ENCODE measurements at regions of chr12 and their contacts with region 1.

Region 1: DNA sequence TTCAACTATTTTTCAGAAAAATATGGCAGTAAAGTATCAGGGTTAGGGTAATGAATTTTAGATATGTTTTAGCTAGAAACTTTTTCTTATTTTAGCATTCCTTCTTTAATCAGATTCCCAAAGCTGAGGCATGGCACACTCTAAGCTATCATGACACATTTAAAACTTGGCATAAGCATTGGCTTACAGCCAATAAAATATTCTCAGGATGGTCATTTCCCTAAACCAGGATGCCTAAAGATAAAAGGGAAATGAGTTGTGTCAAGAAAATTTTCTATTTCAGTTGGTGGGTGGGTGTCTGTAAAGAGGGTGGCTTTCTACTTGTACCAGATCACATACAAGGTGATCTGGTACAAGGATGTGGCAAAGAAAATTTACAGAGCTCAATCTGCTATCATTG is 47.8 kb downstream of the PEBP1 start:
- DNase-seq: no peak
- ATAC-seq: no peak
- H3K4me3 ChIP-seq: no peak overlapping the region
- H3K27ac ChIP-seq: no peak overlapping the region
- H3K4me1 ChIP-seq: peaks cover 6% of the 10 kb centered on the region; the same call in 1 of the 2 replicates
- H3K27me3 ChIP-seq: no peaks in the 10 kb centered on the region
- CTCF ChIP-seq: no peak
- EP300 ChIP-seq: no peak
- POLR2A ChIP-seq: no peak
- RAD21 ChIP-seq: no peak

Region 2: GRCh38 chr12:118145113-118145797 is 38.5 kb before region 1 on chr12:
- CTCF ChIA-PET with region 1: no interaction called
- POLR2A ChIA-PET with region 1: no interaction called
- in situ Hi-C with region 1: no loop called
- intact Hi-C with region 1: no loop called
- DNase-seq: no peak
- ATAC-seq: no peak
- H3K4me3 ChIP-seq: no peak overlapping the region
- H3K27ac ChIP-seq: no peak overlapping the region
- H3K4me1 ChIP-seq: peaks cover 48% of the 10 kb centered on the region
- H3K27me3 ChIP-seq: no peaks in the 10 kb centered on the region
- CTCF ChIP-seq: no peak
- EP300 ChIP-seq: no peak
- POLR2A ChIP-seq: no peak
- RAD21 ChIP-seq: no peak

Region 3: DNA sequence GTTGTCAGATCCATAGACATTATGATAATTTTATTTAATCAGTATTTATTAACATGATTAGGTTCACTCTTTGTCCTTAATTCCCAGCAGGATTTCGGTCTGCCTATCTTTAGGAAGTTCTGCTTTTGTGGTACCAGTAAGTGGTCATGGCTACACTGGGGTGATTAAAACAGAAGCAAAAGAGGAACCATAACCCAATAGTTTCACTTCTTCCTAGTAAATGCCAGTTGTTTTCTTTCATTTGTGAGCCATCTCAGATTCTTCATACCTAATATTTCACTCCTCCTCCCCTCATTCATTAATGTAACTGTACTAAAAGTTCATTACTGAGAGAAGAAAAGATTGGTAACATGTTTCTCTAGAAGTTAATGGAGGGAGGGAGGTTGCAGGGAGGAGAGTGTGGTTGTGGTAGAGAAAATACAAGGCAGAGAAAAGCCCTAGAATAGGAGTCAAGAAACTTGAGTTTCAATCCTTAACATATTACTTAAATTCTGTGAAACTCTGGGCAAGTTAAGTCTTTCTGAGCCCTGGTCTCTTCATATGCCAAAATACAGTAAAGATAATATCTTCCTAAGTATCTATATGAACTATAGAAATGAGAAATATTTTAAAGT is 53.5 kb after region 1 on chr12:
- CTCF ChIA-PET with region 1: no interaction called
- POLR2A ChIA-PET with region 1: no interaction called
- in situ Hi-C with region 1: no loop called
- intact Hi-C with region 1: no loop called
- DNase-seq: no peak
- ATAC-seq: no peak
- H3K4me3 ChIP-seq: no peak overlapping the region
- H3K27ac ChIP-seq: no peak overlapping the region
- H3K4me1 ChIP-seq: no peaks in the 10 kb centered on the region
- H3K27me3 ChIP-seq: no peaks in the 10 kb centered on the region
- CTCF ChIP-seq: no peak
- EP300 ChIP-seq: no peak
- POLR2A ChIP-seq: no peak
- RAD21 ChIP-seq: no peak

Region 4: DNA sequence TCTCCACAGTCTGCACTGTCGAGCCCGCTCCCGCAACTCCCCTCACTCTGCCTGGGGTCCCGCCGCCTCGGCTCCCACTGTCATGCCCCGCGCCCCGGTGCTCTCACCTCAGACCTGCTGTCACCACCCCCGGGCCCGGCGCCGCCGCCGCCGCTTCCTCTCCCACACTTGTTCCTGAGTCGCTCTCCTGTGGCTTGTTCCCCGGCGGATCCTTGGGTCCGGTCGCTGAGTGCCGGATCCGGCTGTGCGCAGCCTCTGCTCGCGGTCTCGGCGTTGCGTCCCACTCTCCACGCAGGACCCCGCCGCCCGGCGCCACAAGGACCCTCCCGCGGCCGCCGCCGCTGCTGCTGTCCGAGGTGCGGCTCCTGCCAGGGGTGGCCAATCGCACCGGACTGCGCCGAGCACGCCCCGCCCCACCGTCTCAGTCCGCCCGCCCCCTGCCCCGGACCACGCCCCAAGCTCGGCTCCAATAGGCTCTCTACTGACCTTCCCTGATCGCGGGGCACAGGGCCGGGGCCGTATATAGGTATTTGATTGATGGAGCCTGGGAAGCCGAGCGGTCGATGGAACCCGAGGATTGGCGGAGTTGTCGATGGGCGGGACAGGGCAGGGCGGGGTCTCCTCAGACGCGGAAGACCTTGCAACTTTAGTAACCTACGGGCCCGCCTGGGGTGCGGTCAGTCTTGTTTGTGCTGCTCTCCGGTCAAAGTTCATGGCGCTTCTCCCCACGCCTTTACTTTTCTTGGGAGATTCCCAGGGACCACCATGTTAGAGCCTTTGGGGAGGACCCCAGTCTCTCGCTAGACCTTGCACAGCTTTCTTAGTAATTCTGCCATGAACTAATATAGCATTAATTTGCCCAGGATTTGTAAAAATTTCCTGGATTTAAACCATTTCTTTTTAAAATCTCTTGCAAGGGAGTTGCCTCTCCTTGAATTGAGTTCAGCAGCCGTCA is 189.1 kb after region 1 on chr12 and contains the start of gene TAOK3:
- CTCF ChIA-PET with region 1: interaction called, 17 read pairs
- POLR2A ChIA-PET with region 1: interaction called, 3 read pairs
- in situ Hi-C with region 1: loop called (anchors 5 kb)
- intact Hi-C with region 1: loop called (anchors 1 kb)
- DNase-seq: peak; percentile 98
- ATAC-seq: peak; percentile 86
- H3K4me3 ChIP-seq: peak within 1 kb of the TSS; percentile 91 to 95 (median 94)
- H3K27ac ChIP-seq: peak within 1 kb of the TSS; percentile 97
- H3K4me1 ChIP-seq: peaks cover 35% of the 10 kb centered on the region
- H3K27me3 ChIP-seq: no peaks in the 10 kb centered on the region; a peak in 1 of 5 replicates
- CTCF ChIP-seq: no peak
- EP300 ChIP-seq: peak in 1 of 2 experiments; percentile 36; a peak in 2 of 4 replicates
- POLR2A ChIP-seq: peak; percentile 91 to 97
- RAD21 ChIP-seq: peak; percentile 38; the same call in 1 of the 2 replicates
- total RNA-seq, gene TAOK3: 12.3 and 16.5 TPM in 2 replicates